CD14-positive monocyte (primary cell): ENCODE measurements at regions of chr1 and their contacts with region 1.

Region 1: GRCh38 chr1:89670163-89670562 is 37.2 kb downstream of the LRRC8C start:
- DNase-seq: peak; percentile 81 to 96 (median 91)
- H3K4me3 ChIP-seq: peak overlapping the region in 2 of 3 experiments; percentile 33 to 59
- H3K4me3 Mint-ChIP-seq: peak overlapping the region; percentile 2 to 55
- H3K27ac ChIP-seq: peak overlapping the region in 1 of 2 donors; percentile 76
- H3K27ac Mint-ChIP-seq: peak overlapping the region; percentile 64 to 96 (median 94)
- H3K4me1 ChIP-seq: peaks cover 61 to 73% of the 10 kb centered on the region in 2 donors
- H3K4me1 Mint-ChIP-seq: peaks cover 89% of the 10 kb centered on the region
- H3K27me3 ChIP-seq: no peaks in the 10 kb centered on the region
- H3K27me3 Mint-ChIP-seq: peaks cover 0 to 2% (median 0%) of the 10 kb centered on the region in 3 donors
- CTCF ChIP-seq: no peak

Region 2: DNA sequence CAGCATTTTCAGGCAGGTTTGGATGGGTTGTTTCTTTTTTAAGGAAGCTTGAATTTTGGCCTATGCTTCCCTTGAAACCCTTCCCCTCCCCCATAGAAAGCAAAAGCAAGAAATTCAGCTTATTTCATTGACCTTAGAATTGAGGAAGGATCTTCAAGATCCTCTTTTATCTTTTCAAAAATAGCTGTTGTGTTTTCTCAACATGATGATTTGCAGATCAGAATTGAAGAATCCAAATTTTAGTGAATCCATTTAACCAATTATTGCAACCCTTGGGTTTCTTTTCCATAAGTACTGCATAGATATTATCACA is 36.5 kb after region 1 on chr1:
- intact Hi-C with region 1: loop called in 1 of 2 experiments (anchors 5 kb)
- DNase-seq: peak; percentile 77
- H3K4me3 ChIP-seq: peak overlapping the region in 1 of 3 experiments; percentile 48
- H3K4me3 Mint-ChIP-seq: peak overlapping the region in 1 of 2 donors; percentile 67
- H3K27ac ChIP-seq: peak overlapping the region; percentile 53 to 56
- H3K27ac Mint-ChIP-seq: peak overlapping the region; percentile 82 to 93 (median 91)
- H3K4me1 ChIP-seq: peaks cover 40 to 41% of the 10 kb centered on the region in 2 donors
- H3K4me1 Mint-ChIP-seq: peaks cover 51% of the 10 kb centered on the region
- H3K27me3 ChIP-seq: no peaks in the 10 kb centered on the region
- H3K27me3 Mint-ChIP-seq: no peaks in the 10 kb centered on the region
- CTCF ChIP-seq: no peak